ENCODE measurements at regions of chr18 and their contacts with region 1.

Region 1: GRCh38 chr18:48445540-48445939 is 36.4 kb upstream of the ZBTB7C start:
- DNase-seq: no peak
- H3K4me3 ChIP-seq: no peak overlapping the region
- H3K27me3 ChIP-seq: peaks cover 44% of the 10 kb centered on the region
- CTCF ChIP-seq: peak; percentile 98

Region 2: DNA sequence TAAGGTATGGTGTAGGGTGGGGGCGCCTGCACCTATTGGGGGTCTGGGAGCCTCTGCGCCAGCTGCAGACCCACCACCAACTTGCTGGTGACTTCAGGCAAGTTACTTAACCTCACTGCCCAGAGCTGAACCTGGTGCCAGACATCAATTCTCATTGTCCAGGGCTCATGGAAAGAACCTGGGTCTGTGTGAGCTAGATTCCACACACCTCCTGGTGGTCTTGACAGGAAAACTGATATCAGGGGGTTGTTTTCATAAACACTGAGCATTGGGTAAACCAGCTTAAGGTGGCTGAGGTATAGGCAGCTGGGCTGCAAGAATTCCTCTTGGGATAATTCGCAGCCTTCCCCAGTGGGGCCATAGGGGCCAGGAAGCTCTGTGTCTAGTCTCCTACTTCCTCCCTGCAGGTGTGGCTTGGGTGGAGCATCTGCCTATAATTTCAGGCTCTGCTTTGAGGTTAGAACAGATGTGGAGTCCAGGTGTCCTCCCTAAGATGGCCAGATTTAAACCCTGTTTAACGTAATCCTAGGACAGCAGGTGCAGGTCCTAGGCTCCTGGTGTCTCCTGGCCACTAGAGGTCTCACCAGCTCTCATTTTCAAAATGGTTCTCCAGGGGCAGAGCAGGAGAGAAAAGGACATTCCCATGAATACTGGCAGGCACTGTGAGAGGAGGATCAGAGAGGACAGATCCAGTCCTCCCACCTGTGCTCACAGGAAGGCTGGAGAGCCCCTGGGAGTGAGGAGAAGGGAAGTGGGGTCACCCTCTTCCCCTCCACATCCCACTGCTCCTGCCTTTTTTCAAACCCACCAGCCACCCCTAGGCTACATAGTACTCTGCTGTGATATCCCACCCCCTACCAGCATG is 414.7 kb before region 1 on chr18:
- CTCF ChIA-PET with region 1: interaction called, 50 read pairs
- POLR2A ChIA-PET with region 1: no interaction called
- DNase-seq: no peak
- H3K4me3 ChIP-seq: no peak overlapping the region
- H3K27me3 ChIP-seq: peaks cover 2% of the 10 kb centered on the region; the same call in 1 of the 2 replicates
- CTCF ChIP-seq: peak; percentile 83

Region 3: DNA sequence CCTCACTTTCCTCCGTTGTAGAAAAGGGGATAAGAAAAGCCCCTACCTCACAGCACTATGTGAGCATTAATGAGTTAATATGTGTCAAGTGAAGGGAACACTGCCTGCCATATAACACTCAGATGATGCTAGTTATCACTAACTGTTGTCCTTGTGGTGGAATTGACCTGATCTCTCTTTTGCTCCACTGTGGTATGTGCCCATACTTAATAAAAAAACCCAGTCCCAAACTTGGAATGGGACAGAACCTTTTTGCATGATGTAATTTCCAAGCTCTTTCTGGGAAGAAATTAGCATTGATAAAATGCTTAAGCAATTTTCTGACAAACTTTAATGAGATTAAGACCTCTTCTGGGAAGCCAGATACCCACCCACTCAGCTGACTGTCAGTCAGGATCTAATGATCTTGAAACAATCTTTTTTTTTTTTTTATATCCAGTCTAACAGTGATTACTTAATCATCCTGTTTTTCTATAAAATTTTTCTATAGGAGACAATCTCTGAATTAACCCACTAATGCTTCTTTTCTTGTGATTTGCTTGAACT is 195.1 kb before region 1 on chr18:
- CTCF ChIA-PET with region 1: no interaction called
- POLR2A ChIA-PET with region 1: no interaction called
- DNase-seq: no peak
- H3K4me3 ChIP-seq: no peak overlapping the region
- H3K27me3 ChIP-seq: peaks cover 7% of the 10 kb centered on the region
- CTCF ChIP-seq: no peak

Region 4: GRCh38 chr18:48328473-48329210 is 116.9 kb before region 1 on chr18:
- CTCF ChIA-PET with region 1: no interaction called
- POLR2A ChIA-PET with region 1: interaction called, 10 read pairs
- DNase-seq: no peak
- H3K4me3 ChIP-seq: no peak overlapping the region
- H3K27me3 ChIP-seq: peaks cover 4% of the 10 kb centered on the region
- CTCF ChIP-seq: no peak

Region 5: DNA sequence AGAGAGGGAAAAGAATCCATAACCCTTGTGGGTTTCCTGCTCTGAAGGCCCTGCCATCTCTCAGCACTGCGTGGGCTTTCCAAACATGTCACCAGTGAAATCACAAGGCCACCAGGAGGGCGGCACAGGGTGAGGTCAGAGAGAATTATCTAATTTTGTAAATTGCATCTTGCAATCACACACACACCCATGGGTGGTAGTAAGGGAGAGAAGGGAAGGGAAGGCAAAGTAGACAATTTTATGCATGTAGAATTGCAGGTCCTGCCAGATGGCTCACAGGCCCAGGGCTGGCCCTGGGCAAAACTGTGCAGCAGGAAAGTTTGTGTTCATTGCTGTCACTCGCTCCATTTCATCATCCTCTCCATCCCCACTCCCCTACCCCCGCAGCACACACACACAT is 15.4 kb before region 1 on chr18:
- CTCF ChIA-PET with region 1: interaction called, 45 read pairs
- POLR2A ChIA-PET with region 1: no interaction called
- DNase-seq: no peak
- H3K4me3 ChIP-seq: no peak overlapping the region
- H3K27me3 ChIP-seq: peaks cover 10% of the 10 kb centered on the region
- CTCF ChIP-seq: no peak

Region 6: GRCh38 chr18:48460929-48461583 is 15.5 kb after region 1 on chr18:
- CTCF ChIA-PET with region 1: interaction called, 61 read pairs
- POLR2A ChIA-PET with region 1: no interaction called
- DNase-seq: no peak
- H3K4me3 ChIP-seq: no peak overlapping the region
- H3K27me3 ChIP-seq: peaks cover 2% of the 10 kb centered on the region
- CTCF ChIP-seq: no peak

Region 7: DNA sequence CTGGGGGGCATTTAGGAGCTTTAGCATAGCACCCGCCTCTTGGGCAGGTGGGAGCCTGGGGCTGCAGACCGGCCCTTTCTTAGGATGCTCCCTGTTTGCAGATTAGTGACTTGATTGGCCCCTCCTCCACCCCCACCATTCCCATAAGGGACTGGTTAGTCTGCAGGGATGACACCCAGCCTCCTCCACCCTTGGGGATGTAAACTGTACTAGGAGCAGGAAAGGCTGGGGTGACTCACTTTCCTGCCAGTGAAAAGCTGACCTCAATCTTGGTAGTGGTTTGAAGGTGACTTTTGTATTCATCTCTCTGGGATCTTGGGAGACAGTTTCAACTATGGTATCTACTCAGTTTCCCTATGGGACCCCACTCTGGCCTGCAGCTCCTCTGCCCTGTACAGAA is 117.5 kb after region 1 on chr18:
- CTCF ChIA-PET with region 1: no interaction called
- POLR2A ChIA-PET with region 1: no interaction called
- DNase-seq: peak; percentile 53
- H3K4me3 ChIP-seq: no peak overlapping the region
- H3K27me3 ChIP-seq: no peaks in the 10 kb centered on the region
- CTCF ChIP-seq: no peak

Measured in BJ (cell line).